OCI-LY7 (cell line): ENCODE measurements at regions of chr17 and their contacts with region 1.

Region 1: GRCh38 chr17:41801374-41802271 is 10.1 kb downstream of the P3H4 start:
- DNase-seq: peak; percentile 82
- H3K4me3 ChIP-seq: no peak overlapping the region
- H3K27ac ChIP-seq: no peak overlapping the region
- H3K4me1 ChIP-seq: peaks cover 28% of the 10 kb centered on the region
- CTCF ChIP-seq: peak; percentile 97

Region 2: GRCh38 chr17:41724476-41725050 is 77.1 kb before region 1 on chr17:
- CTCF ChIA-PET with region 1: interaction called, 10 read pairs
- POLR2A ChIA-PET with region 1: interaction called, 4 read pairs
- intact Hi-C with region 1: no loop called
- DNase-seq: no peak
- H3K4me3 ChIP-seq: no peak overlapping the region
- H3K27ac ChIP-seq: no peak overlapping the region
- H3K4me1 ChIP-seq: no peaks in the 10 kb centered on the region
- CTCF ChIP-seq: no peak

Region 3: DNA sequence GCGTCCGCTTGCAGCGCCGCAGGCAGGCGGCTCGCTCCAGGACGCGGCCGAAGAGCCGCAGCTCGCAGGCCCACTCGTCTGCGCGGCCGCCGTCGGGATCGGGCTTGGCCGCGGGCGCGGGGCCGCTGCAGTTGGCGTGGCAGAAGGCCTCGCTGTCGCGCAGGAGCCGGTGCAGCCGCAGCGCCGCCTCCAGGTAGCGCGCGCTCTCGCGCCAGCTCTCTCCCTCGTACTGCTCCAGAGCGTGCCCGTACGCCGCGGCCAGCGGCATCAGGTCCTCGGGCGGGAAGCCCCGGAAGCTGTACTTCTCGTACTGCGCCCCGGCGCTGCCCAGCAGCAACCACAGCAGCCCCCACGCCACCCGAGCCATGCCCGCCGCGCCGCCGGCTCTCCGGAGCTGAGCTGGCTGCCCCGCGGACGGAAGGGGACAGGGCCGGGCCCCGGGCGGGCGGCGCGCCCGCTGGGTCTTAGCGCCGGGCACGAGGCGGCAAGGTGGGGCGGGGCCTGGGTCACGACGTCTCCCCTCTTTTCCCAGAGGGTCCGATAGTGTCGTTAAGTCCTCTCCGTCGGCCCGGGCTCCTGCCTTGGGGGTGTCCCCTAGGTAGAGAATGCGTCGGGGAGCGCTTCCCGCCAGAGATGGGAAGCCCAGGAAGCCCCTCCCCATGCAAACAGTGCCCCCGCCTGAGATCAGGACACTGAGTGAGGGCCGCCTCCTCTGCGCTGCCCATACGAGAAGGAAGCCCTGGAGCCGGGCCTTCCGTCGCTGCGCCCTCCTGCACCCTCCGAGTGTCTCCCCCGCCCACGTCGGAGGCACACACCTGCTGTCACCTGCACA is 10.1 kb after region 1 on chr17 and contains the start of gene P3H4:
- CTCF ChIA-PET with region 1: no interaction called
- POLR2A ChIA-PET with region 1: no interaction called
- intact Hi-C with region 1: no loop called
- DNase-seq: peak; percentile 41
- H3K4me3 ChIP-seq: peak within 1 kb of the TSS; percentile 65
- H3K27ac ChIP-seq: no peak within 1 kb of the TSS
- H3K4me1 ChIP-seq: peaks cover 9% of the 10 kb centered on the region
- CTCF ChIP-seq: peak; percentile 59
- total RNA-seq, gene P3H4: 0.08 TPM in 1 of 2 replicates, not detected in the other

Region 4: DNA sequence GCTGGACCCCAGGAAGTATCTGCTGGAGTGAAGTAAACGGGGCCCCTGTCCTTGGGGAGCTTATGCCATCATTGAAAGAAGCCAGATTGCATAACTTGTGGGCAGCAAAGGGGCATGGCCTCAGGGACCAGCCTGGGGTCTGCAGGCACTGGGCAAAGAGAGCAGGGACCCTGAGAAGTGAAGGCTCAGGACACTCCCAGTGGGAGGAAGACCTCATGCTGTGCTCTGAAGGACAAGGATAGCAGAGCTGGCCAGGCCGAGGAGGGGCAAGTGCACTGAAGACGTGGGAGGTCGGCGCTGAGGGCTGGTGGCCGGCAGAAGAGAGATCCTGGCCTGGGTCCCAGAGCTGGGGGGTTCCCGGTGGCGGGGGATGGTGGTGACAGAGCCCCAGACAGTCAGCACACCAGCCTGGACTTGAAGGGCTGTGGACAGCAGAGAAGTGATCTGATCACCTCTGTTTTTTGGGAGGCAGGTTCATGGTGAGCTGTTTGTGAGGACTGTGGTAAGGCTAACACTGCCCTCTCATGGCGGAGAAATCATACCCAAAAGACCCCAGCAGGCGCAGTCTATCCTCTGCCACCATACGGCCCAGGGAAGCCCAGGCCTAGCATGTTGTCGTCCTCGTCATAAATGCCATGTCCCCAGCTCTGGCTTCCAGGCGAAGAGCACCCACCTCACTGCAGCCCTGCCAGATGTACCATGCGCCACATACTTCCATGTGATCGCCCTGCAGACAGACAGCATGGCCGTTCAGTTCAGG is 157.9 kb after region 1 on chr17:
- CTCF ChIA-PET with region 1: interaction called, 4 read pairs
- POLR2A ChIA-PET with region 1: no interaction called
- intact Hi-C with region 1: loop called (anchors 1 kb)
- DNase-seq: peak; percentile 61
- H3K4me3 ChIP-seq: no peak overlapping the region
- H3K27ac ChIP-seq: no peak overlapping the region
- H3K4me1 ChIP-seq: peaks cover 17% of the 10 kb centered on the region
- CTCF ChIP-seq: peak; percentile 76